ENCODE measurements at regions of chr20 and their contacts with region 1.

Region 1: GRCh38 chr20:5080384-5080877 is 39.3 kb downstream of the PCNA start:
- DNase-seq: peak; percentile 94 to 97 (median 95)
- H3K4me3 ChIP-seq: peak overlapping the region in 1 of 3 experiments; percentile 34
- H3K4me3 Mint-ChIP-seq: peak overlapping the region; percentile 40 to 43
- H3K27ac ChIP-seq: peak overlapping the region; percentile 93 to 97
- H3K27ac Mint-ChIP-seq: peak overlapping the region; percentile 97 to 99 (median 98)
- H3K4me1 ChIP-seq: peaks cover 68 to 77% of the 10 kb centered on the region in 2 donors
- H3K4me1 Mint-ChIP-seq: peaks cover 71% of the 10 kb centered on the region
- H3K27me3 ChIP-seq: no peaks in the 10 kb centered on the region
- H3K27me3 Mint-ChIP-seq: no peaks in the 10 kb centered on the region
- CTCF ChIP-seq: no peak

Region 2: GRCh38 chr20:4813863-4814695 is 266.4 kb before region 1 on chr20:
- intact Hi-C with region 1: loop called in 1 of 2 experiments (anchors 10 kb)
- DNase-seq: peak; percentile 89 to 96 (median 93)
- H3K4me3 ChIP-seq: peak overlapping the region; percentile 34 to 68 (median 39)
- H3K4me3 Mint-ChIP-seq: peak overlapping the region; percentile 86 to 94
- H3K27ac ChIP-seq: peak overlapping the region; percentile 96 to 100
- H3K27ac Mint-ChIP-seq: peak overlapping the region; percentile 100
- H3K4me1 ChIP-seq: peaks cover 94 to 100% of the 10 kb centered on the region in 2 donors
- H3K4me1 Mint-ChIP-seq: peaks cover 93% of the 10 kb centered on the region
- H3K27me3 ChIP-seq: no peaks in the 10 kb centered on the region
- H3K27me3 Mint-ChIP-seq: peaks cover 0 to 3% (median 0%) of the 10 kb centered on the region in 3 donors
- CTCF ChIP-seq: peak; percentile 15

Region 3: DNA sequence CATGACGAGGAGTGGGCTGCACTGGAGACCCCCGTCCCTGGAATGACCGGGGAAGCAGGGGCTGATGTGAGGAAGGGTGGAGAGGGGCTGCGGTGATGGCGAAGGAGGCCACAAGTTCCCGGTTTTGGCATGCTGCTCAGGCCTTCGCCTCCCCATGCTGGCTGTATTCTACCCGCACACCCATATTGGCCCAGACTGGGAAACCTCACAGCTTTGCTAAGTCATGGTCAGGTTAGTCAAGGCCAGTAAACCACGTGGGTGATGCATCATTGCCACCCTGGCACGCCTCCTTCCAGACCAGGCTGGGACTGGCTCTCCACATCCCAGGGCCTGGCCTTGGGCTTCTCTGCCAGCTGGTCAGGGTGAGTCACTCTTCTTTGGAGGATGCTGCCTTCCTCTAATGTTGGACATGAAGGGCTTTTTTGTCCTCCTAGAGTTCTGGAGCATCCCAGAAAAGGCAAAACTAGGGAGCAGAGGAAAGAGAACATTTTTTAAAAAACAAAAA is 14.5 kb before region 1 on chr20:
- intact Hi-C with region 1: loop called (anchors 1 to 2 kb)
- DNase-seq: peak; percentile 97 to 100 (median 100)
- H3K4me3 ChIP-seq: no peak overlapping the region
- H3K4me3 Mint-ChIP-seq: no peak overlapping the region
- H3K27ac ChIP-seq: peak overlapping the region; percentile 90 to 97
- H3K27ac Mint-ChIP-seq: peak overlapping the region; percentile 95 to 99 (median 98)
- H3K4me1 ChIP-seq: peaks cover 26 to 38% of the 10 kb centered on the region in 2 donors
- H3K4me1 Mint-ChIP-seq: peaks cover 39% of the 10 kb centered on the region
- H3K27me3 ChIP-seq: no peaks in the 10 kb centered on the region
- H3K27me3 Mint-ChIP-seq: peaks cover 0 to 2% (median 1%) of the 10 kb centered on the region in 3 donors
- CTCF ChIP-seq: no peak

Region 4: GRCh38 chr20:5092765-5093339 is 12.4 kb after region 1 on chr20:
- intact Hi-C with region 1: no loop called
- DNase-seq: no peak
- H3K4me3 ChIP-seq: no peak overlapping the region
- H3K4me3 Mint-ChIP-seq: no peak overlapping the region
- H3K27ac ChIP-seq: no peak overlapping the region
- H3K27ac Mint-ChIP-seq: peak overlapping the region; percentile 2 to 75 (median 9)
- H3K4me1 ChIP-seq: peaks cover 32% of the 10 kb centered on the region in 2 donors
- H3K4me1 Mint-ChIP-seq: peaks cover 38% of the 10 kb centered on the region
- H3K27me3 ChIP-seq: no peaks in the 10 kb centered on the region
- H3K27me3 Mint-ChIP-seq: no peaks in the 10 kb centered on the region
- CTCF ChIP-seq: no peak

Region 5: GRCh38 chr20:6265204-6265904 is 1184.9 kb after region 1 on chr20:
- intact Hi-C with region 1: no loop called
- DNase-seq: no peak
- H3K4me3 ChIP-seq: no peak overlapping the region
- H3K4me3 Mint-ChIP-seq: no peak overlapping the region
- H3K27ac ChIP-seq: no peak overlapping the region
- H3K27ac Mint-ChIP-seq: no peak overlapping the region
- H3K4me1 ChIP-seq: no peaks in the 10 kb centered on the region
- H3K4me1 Mint-ChIP-seq: peaks cover 5% of the 10 kb centered on the region
- H3K27me3 ChIP-seq: peaks cover 0 to 3% of the 10 kb centered on the region in 2 donors
- H3K27me3 Mint-ChIP-seq: peaks cover 8 to 11% (median 10%) of the 10 kb centered on the region in 3 donors
- CTCF ChIP-seq: no peak

Measured in CD14-positive monocyte (primary cell).